Heart left ventricle (tissue), 16 donors: ENCODE measurements at regions of chr2 and their contacts with region 1.

Region 1: GRCh38 chr2:69643602-69644505 is at the start of gene AAK1:
- DNase-seq: peak; percentile 93 to 95 (median 94)
- ATAC-seq: peak; percentile 80 to 95 (median 92)
- H3K4me3 ChIP-seq: peak within 1 kb of the TSS; percentile 70 to 99 (median 95)
- H3K27ac ChIP-seq: peak within 1 kb of the TSS; percentile 93 to 99 (median 98)
- H3K4me1 ChIP-seq: peaks cover 0 to 71% (median 40%) of the 10 kb centered on the region in 12 donors
- H3K27me3 ChIP-seq: no peaks in the 10 kb centered on the region
- CTCF ChIP-seq: peak in 1 of 12 donors; percentile 7
- POLR2A ChIP-seq: peak in 1 of 2 donors; percentile 85
- total RNA-seq, gene AAK1: 68.7 to 167 (median 131) TPM

Region 2: GRCh38 chr2:69559442-69560146 is 84.3 kb before region 1 on chr2:
- intact Hi-C with region 1: loop called in 8 of 10 experiments (anchors 2 to 10 kb)
- DNase-seq: no peak
- ATAC-seq: peak; percentile 30 to 81 (median 77)
- H3K4me3 ChIP-seq: no peak overlapping the region
- H3K27ac ChIP-seq: peak overlapping the region in 4 of 12 donors; percentile 4 to 47 (median 31)
- H3K4me1 ChIP-seq: peaks cover 10 to 62% (median 38%) of the 10 kb centered on the region in 12 donors
- H3K27me3 ChIP-seq: no peaks in the 10 kb centered on the region
- CTCF ChIP-seq: peak; percentile 49 to 75 (median 66)
- POLR2A ChIP-seq: no peak

Region 3: GRCh38 chr2:69581774-69582581 is 61.9 kb before region 1 on chr2:
- intact Hi-C with region 1: loop called in 1 of 10 experiments (anchors 5 kb)
- DNase-seq: peak in 2 of 5 donors; percentile 20 to 43
- ATAC-seq: peak in 2 of 4 donors; percentile 13 to 15
- H3K4me3 ChIP-seq: peak overlapping the region in 10 of 12 donors; percentile 9 to 46 (median 39)
- H3K27ac ChIP-seq: peak overlapping the region; percentile 38 to 84 (median 74)
- H3K4me1 ChIP-seq: peaks cover 5 to 96% (median 64%) of the 10 kb centered on the region in 12 donors
- H3K27me3 ChIP-seq: no peaks in the 10 kb centered on the region
- CTCF ChIP-seq: no peak
- POLR2A ChIP-seq: no peak

Region 4: DNA sequence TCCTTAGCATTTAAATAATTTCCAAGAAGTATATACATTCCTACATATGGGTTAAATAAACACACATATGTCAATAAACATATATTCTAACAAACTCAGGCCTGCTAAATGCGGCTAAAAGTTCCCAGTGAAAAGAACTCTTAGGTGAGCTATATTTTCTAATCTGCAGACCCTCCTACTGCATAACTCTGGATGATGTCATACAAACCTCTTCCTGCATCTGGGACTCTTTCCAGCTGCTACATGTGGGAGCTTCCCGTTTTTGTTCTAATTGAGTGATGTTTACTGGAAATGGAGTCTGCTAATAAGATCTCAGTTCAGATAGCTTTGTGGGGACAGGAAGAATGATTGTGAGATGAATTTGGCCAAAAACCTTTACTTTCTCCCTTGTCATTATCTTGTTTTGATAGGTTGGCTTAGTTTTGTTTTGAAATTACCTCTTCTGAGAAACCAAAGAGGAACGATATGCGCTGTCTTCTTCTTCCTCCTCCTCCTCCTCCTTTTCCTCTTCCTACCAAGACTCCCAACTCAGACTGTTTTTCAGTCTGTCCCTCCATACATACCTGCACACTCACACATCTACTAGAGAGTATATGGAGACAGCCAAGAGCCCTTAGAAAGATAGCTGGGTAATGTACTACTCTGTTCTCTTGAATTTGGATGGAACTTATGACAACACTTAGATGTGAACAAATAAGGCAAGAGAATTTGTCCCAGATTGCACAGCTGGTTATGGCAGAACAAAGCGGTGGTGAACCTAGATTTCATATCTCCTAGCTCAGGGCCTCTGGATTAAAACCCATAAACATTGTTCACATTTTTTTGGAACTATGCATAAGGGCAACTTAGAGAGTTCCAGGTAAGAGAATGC is 39.5 kb after region 1 on chr2:
- intact Hi-C with region 1: loop called in 2 of 10 experiments (anchors 5 kb)
- DNase-seq: peak in 2 of 5 donors; percentile 60 to 67
- ATAC-seq: peak; percentile 78 to 93 (median 87)
- H3K4me3 ChIP-seq: peak overlapping the region in 9 of 12 donors; percentile 4 to 27 (median 11)
- H3K27ac ChIP-seq: peak overlapping the region; percentile 39 to 84 (median 68)
- H3K4me1 ChIP-seq: peaks cover 3 to 49% (median 17%) of the 10 kb centered on the region in 12 donors
- H3K27me3 ChIP-seq: no peaks in the 10 kb centered on the region
- CTCF ChIP-seq: no peak
- POLR2A ChIP-seq: no peak

Region 5: GRCh38 chr2:69717861-69718273 is 74.0 kb after region 1 on chr2:
- intact Hi-C with region 1: loop called in 8 of 10 experiments (anchors 2 to 10 kb)
- DNase-seq: no peak
- ATAC-seq: no peak
- H3K4me3 ChIP-seq: no peak overlapping the region
- H3K27ac ChIP-seq: no peak overlapping the region
- H3K4me1 ChIP-seq: peaks cover 0 to 8% (median 0%) of the 10 kb centered on the region in 12 donors
- H3K27me3 ChIP-seq: no peaks in the 10 kb centered on the region
- CTCF ChIP-seq: no peak
- POLR2A ChIP-seq: no peak